Activated CD4-positive, alpha-beta T cell treated with anti-CD3 and anti-CD28 coated beads for 36 hours (primary cell): ENCODE measurements at regions of chr2 and their contacts with region 1.

Region 1: GRCh38 chr2:237441605-237442274 is 27.8 kb upstream of the COL6A3 start:
- DNase-seq: peak; percentile 69
- ATAC-seq: peak; percentile 71
- H3K4me3 Mint-ChIP-seq: peak overlapping the region; percentile 50
- H3K27ac Mint-ChIP-seq: peak overlapping the region; percentile 96
- H3K4me1 Mint-ChIP-seq: peaks cover 82% of the 10 kb centered on the region
- H3K27me3 Mint-ChIP-seq: no peaks in the 10 kb centered on the region

Region 2: DNA sequence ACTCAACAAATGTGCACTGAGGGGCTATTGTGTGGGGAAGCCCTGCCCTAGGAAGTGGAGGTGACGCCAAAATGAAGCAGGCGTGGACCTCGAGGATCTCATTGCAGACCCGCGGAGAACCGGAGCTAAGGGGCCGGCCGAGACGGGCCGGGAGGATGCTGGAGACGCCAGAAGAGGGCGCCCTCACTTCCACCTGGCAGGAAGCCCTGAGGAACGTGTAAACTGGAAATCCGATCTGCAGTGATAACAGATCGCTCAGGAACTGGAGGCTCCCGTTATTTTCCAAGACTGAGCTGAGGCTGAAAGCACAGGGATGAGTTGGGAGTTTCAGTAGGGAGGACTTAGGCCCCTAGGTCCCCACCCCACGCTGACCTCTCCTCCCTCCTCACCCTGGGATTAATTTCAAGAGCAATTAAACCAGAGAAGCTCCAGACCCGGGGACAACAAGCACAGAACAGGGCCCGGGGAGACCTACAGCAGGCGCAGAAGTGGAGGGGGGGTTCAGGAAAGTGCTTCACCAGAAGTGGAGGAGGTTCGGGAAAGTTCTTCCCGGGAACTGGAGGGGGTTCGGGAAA is 20.1 kb before region 1 on chr2:
- CTCF ChIA-PET with region 1: interaction called, 67 read pairs
- POLR2A ChIA-PET with region 1: interaction called, 6 read pairs
- intact Hi-C with region 1: no loop called
- DNase-seq: peak; percentile 90
- ATAC-seq: peak; percentile 95
- H3K4me3 Mint-ChIP-seq: peak overlapping the region; percentile 50
- H3K27ac Mint-ChIP-seq: peak overlapping the region; percentile 83
- H3K4me1 Mint-ChIP-seq: peaks cover 45% of the 10 kb centered on the region
- H3K27me3 Mint-ChIP-seq: peaks cover 4% of the 10 kb centered on the region

Region 3: GRCh38 chr2:237427769-237428506 is 13.8 kb before region 1 on chr2:
- CTCF ChIA-PET with region 1: interaction called, 67 read pairs
- POLR2A ChIA-PET with region 1: interaction called, 12 read pairs
- intact Hi-C with region 1: loop called (anchors 1 kb)
- DNase-seq: peak; percentile 92
- ATAC-seq: peak; percentile 79
- H3K4me3 Mint-ChIP-seq: peak overlapping the region; percentile 34
- H3K27ac Mint-ChIP-seq: peak overlapping the region; percentile 97
- H3K4me1 Mint-ChIP-seq: peaks cover 91% of the 10 kb centered on the region
- H3K27me3 Mint-ChIP-seq: peaks cover 2% of the 10 kb centered on the region

Region 4: DNA sequence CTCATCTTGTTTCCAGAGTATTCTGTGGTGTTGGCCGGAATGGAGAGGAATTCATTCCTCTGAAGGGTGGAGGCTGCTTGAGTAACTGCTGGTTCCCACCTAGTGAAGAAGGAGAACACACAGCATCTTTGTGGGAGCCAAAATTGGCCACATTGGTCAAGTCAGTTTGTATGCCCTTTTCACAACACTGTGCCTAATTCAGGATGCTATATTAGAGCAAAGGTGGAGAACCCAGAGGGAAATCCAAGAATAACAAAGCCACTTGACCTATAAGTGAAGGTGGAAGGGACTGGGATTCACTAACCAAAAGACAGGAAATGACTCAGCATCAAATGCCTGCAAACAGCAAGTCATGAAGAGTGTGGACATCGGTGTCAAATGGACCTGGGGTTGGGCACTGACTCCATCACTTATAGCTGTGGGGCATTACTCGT is 18.0 kb after region 1 on chr2:
- CTCF ChIA-PET with region 1: interaction called, 9 read pairs
- POLR2A ChIA-PET with region 1: interaction called, 9 read pairs
- intact Hi-C with region 1: loop called (anchors 1 to 2 kb)
- DNase-seq: no peak
- ATAC-seq: no peak
- H3K4me3 Mint-ChIP-seq: no peak overlapping the region
- H3K27ac Mint-ChIP-seq: no peak overlapping the region
- H3K4me1 Mint-ChIP-seq: peaks cover 28% of the 10 kb centered on the region
- H3K27me3 Mint-ChIP-seq: no peaks in the 10 kb centered on the region

Region 5: DNA sequence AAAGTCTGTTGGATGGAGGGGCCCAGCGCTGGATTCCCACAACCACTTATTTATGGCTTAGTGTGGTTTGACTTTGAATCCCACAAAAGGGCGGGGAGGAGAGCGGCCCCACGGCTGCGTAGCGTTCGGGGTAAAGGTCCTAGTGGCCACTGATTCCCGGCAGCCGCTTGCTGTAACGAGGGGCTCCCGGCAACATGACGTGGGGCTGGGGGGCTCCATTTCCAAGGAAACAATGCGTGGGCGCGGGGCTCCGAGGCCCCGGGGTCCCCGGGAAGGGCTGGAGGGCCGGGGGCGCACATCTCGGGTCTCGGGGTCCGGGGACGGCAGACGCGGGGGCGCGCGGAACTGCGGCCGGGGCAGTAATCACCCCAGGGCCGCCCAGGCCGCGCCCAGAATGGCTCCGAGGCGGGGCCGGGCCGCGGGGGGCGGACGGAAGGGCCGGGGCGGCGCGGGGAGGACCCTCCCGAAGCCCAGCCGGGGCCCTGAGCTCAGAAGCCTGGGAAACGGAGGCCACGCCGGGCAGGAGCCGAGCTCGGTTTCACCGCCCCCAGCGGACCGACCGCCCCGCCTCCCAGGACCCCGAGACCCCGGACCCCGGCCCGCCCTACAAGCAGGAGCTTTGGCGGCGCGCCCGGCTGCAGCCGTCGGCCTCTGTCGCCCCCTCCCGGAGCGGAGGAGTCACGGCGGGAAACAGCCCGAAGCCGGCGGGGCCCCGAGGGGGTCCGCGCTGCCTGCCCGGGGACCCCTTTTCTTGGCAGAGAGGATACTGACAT is 33.4 kb after region 1 on chr2:
- CTCF ChIA-PET with region 1: interaction called, 11 read pairs
- POLR2A ChIA-PET with region 1: interaction called, 19 read pairs
- intact Hi-C with region 1: loop called in 1 of 2 experiments (anchors 1 kb)
- DNase-seq: peak; percentile 86
- ATAC-seq: peak; percentile 72
- H3K4me3 Mint-ChIP-seq: peak overlapping the region; percentile 73
- H3K27ac Mint-ChIP-seq: peak overlapping the region; percentile 89
- H3K4me1 Mint-ChIP-seq: peaks cover 21% of the 10 kb centered on the region
- H3K27me3 Mint-ChIP-seq: peaks cover 15% of the 10 kb centered on the region

Region 6: DNA sequence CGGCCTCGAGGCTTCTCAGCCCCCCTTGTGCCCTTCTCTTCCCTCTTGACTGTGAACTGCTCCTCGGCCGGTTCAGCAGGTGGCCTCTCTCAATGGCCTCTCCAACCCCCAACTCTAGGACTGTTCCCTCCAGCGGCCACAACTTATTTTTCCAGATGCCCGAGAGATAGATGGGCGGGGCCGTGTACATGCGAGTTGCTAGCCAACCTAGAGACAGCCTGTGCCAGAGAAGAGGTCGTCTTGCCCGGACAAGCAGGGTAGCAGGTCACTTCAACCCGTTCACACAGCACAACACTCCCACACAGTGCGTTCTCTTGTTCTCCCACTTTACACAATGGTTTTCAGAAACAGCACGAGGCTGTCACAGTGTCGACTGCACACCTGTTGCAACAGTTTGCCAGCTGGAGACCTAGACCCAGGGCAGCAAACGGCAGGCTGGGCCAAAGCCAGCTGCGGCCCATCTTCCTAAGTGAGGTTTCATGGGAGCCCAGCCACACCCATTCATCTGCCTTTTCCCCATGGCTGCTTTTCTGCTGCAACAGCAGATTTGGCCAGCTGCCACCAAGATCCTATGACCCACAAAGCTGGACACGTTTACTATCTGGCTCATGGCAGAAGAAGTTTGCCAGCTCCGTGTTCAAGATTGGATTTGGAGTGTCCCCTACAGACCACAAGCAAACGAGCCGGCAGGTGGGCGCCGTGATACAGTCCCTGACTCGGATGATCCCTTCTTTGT is 117.3 kb after region 1 on chr2:
- CTCF ChIA-PET with region 1: no interaction called
- POLR2A ChIA-PET with region 1: no interaction called
- intact Hi-C with region 1: loop called in 1 of 2 experiments (anchors 2 kb)
- DNase-seq: no peak
- ATAC-seq: no peak
- H3K4me3 Mint-ChIP-seq: no peak overlapping the region
- H3K27ac Mint-ChIP-seq: no peak overlapping the region
- H3K4me1 Mint-ChIP-seq: peaks cover 13% of the 10 kb centered on the region
- H3K27me3 Mint-ChIP-seq: peaks cover 9% of the 10 kb centered on the region